ENCODE measurements at regions of chr1 and their contacts with region 1.

Region 1: DNA sequence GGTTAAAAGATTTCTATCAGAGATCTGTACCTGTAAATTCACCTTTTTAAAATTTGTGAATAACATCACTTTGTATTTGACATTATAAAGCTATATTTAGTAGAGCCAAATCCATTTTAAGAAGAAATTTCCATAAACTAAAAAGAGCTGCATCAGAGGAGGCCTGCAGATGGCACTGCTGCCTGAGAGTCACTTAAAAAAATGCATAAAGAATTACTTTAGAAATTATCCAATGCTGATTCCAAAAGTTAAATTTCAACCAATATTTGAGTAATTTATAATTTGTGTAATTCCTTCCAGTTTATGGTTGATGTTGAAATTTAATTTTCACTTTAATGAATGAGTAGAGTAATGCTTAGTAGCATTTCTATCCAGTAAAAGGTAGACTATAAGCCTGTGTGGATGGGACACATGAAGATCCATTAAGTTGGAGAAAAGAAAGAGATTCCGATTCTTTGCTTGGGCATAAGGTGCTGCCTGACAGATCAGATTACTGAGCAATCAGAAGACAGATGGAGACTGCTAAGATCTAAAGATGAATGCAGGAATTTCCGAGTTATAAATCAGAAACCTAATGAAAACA is 20.7 kb upstream of the RPE65 start:
- DNase-seq: no peak
- H3K4me3 ChIP-seq: no peak overlapping the region
- CTCF ChIP-seq: peak; percentile 38

Region 2: DNA sequence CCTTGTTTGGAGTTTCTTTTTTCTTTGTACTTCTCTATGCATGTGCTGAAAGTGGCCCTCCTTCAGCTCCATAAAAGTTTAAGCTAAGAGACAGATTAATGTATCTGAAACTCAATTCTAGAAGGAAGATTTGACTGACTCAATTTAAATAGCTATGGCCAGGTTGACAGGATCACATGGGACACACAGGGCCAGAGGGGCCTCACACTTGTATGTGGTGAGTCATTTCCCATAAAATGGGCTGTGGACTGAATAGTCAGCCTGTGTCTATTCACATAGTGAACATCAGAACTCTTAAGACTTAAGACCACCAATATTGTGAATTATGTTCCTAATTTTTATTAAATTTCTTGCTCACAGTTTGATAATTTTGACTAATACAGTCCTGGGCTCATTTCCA is 72.1 kb after region 1 on chr1:
- CTCF ChIA-PET with region 1: no interaction called
- POLR2A ChIA-PET with region 1: no interaction called
- DNase-seq: no peak
- H3K4me3 ChIP-seq: no peak overlapping the region
- CTCF ChIP-seq: no peak

Region 3: GRCh38 chr1:69737527-69738185 is 1267.2 kb after region 1 on chr1:
- CTCF ChIA-PET with region 1: interaction called, 69 read pairs
- POLR2A ChIA-PET with region 1: no interaction called
- DNase-seq: peak; percentile 23
- H3K4me3 ChIP-seq: no peak overlapping the region
- CTCF ChIP-seq: peak; percentile 61

Measured in AG04449 (cell line).